Right ventricle myocardium superior (tissue), 1 donor: ENCODE measurements at regions of chr20 and their contacts with region 1.

Region 1: DNA sequence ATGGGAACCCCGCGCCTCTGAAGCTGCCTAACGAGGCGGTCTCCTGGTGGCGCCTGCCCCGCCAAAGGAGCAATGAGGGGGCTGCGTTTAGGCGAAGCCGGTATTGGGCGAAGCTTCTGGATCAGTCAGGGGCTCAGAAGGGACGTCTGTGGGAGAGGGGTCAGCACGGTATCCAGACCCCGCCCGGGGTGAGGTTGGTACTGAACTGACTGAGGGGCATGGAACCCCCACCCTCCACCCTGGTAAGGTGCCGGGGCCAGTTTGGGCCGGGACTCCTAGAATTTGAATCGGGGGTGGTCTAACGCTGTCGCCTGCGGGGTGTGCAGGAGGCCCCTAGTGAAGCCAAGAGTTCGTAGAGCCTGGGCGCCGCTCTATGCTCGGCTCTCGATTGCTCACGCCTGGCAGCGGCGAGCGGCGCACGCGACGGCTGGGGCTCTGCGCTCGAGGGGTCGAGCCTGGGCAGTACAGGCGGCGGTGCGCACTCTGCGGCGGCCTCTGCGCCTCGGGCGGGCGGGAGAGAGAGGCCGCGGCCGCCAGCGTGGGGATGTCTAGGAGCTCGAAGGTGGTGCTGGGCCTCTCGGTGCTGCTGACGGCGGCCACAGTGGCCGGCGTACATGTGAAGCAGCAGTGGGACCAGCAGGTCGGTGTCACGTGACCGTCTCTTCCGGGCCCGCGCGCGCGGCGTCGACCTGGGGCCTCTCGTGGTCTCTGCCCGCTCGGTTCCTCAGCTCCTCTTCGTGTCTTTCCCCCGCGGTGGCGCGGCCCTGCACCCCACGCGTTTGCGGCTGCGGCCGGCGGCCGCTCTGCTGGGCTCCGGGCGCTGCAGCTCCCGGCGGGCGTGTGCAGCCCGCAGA is at the starts of genes KAT14 and PET117:
- DNase-seq: peak; percentile 95
- ATAC-seq: peak; percentile 100
- total RNA-seq, gene KAT14: 11.6 TPM
- total RNA-seq, gene PET117: 12.0 TPM

Region 2: GRCh38 chr20:18287915-18288748 is 150.5 kb after region 1 on chr20 and contains the start of gene ZNF133:
- intact Hi-C with region 1: loop called (anchors 10 kb)
- DNase-seq: peak; percentile 99
- ATAC-seq: peak; percentile 100
- total RNA-seq, gene ZNF133: 5.3 TPM